ENCODE measurements at regions of chr3 and their contacts with region 1.

Region 1: GRCh38 chr3:54433846-54434245 is 311.5 kb downstream of the CACNA2D3 start:
- DNase-seq: peak; percentile 82
- ATAC-seq: peak; percentile 97
- H3K4me3 Mint-ChIP-seq: no peak overlapping the region
- H3K27ac Mint-ChIP-seq: no peak overlapping the region
- H3K4me1 Mint-ChIP-seq: peaks cover 17% of the 10 kb centered on the region
- H3K27me3 Mint-ChIP-seq: no peaks in the 10 kb centered on the region
- CTCF ChIP-seq: peak; percentile 33; the same call in 1 of the 2 replicates

Region 2: GRCh38 chr3:54530944-54531343 is 97.1 kb after region 1 on chr3:
- CTCF ChIA-PET with region 1: interaction called, 24 read pairs
- POLR2A ChIA-PET with region 1: no interaction called
- DNase-seq: no peak
- ATAC-seq: no peak
- H3K4me3 Mint-ChIP-seq: no peak overlapping the region
- H3K27ac Mint-ChIP-seq: no peak overlapping the region
- H3K4me1 Mint-ChIP-seq: peaks cover 17% of the 10 kb centered on the region
- H3K27me3 Mint-ChIP-seq: no peaks in the 10 kb centered on the region
- CTCF ChIP-seq: no peak

Region 3: DNA sequence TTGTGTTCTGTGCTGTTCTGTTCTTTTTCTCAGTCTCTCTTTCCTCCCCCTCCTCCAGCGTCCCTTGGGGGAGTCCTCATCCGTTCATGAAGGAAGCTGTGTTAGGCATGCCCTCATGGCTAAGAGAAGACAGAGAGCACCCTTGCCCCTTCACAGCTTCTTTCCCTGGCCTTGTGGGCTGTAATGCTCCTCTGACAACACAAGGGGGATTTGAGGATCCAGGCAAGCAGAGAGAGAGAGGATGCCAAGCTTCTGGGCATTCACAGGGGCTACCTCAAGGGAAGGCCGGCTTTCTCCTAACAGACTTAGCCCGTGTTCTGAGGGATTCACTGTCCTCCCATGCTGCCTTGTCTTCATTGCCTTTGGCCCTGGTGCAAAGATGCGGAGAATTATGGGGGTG is 104.5 kb after region 1 on chr3:
- CTCF ChIA-PET with region 1: interaction called, 24 read pairs
- POLR2A ChIA-PET with region 1: no interaction called
- DNase-seq: peak; percentile 48
- ATAC-seq: peak; percentile 90
- H3K4me3 Mint-ChIP-seq: no peak overlapping the region
- H3K27ac Mint-ChIP-seq: no peak overlapping the region
- H3K4me1 Mint-ChIP-seq: peaks cover 2% of the 10 kb centered on the region; the same call in 1 of the 2 replicates
- H3K27me3 Mint-ChIP-seq: no peaks in the 10 kb centered on the region
- CTCF ChIP-seq: peak; percentile 48